K562 (cell line): ENCODE measurements at regions of chr11 and their contacts with region 1.

Region 1: DNA sequence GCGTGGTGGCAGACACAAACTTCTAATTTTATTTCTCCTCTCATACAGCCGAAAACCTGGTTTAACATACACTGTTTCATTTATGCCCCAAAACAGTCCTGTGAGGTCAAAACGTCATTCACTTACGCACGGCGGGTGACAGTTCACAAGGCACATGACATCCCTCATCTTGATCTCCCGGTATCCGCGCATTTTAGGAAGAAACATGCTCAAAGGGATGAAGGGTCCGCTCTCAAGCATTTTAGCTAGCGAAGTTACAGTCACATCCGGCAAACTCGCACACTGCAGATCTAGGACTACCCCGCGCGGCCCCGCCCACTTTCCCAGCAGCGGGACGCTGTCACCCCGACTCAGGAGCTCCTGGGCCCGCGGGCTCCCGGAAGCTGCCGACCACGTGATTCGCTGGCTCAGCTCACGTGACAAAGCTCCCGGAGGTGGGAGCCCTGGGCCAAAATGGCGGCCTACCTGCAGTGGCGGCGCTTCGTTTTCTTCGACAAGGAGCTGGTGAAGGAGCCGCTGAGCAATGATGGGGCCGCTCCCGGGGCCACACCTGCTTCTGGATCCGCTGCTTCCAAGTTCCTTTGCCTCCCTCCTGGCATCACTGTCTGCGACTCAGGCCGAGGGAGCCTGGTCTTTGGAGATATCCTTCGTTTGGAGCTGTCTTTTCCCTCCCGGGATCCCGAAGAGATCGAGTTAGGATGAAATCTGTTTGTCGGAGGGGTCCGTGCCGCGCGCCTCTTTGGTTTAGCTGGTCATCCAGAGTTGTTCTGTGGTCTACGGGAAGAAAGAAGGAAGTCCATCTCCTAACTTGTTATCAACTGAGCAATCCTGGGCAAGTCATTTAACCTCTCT is at the start of gene VPS11:
- DNase-seq: peak; percentile 93 to 99 (median 96)
- ATAC-seq: peak; percentile 94
- H3K4me3 ChIP-seq: peak within 1 kb of the TSS; percentile 57
- H3K27ac ChIP-seq: peak within 1 kb of the TSS; percentile 71
- H3K4me1 ChIP-seq: peaks cover 15 to 21% of the 10 kb centered on the region in 2 experiments; a peak in 4 of 5 replicates
- H3K27me3 ChIP-seq: no peaks in the 10 kb centered on the region
- CTCF ChIP-seq: no peak
- EP300 ChIP-seq: 0 out of 2 replicates have a peak, but pooled peaks have one; percentile 21
- POLR2A ChIP-seq: peak; percentile 80
- RAD21 ChIP-seq: no peak
- polyA plus RNA-seq, gene VPS11: 19.7 to 31.6 TPM

Region 2: DNA sequence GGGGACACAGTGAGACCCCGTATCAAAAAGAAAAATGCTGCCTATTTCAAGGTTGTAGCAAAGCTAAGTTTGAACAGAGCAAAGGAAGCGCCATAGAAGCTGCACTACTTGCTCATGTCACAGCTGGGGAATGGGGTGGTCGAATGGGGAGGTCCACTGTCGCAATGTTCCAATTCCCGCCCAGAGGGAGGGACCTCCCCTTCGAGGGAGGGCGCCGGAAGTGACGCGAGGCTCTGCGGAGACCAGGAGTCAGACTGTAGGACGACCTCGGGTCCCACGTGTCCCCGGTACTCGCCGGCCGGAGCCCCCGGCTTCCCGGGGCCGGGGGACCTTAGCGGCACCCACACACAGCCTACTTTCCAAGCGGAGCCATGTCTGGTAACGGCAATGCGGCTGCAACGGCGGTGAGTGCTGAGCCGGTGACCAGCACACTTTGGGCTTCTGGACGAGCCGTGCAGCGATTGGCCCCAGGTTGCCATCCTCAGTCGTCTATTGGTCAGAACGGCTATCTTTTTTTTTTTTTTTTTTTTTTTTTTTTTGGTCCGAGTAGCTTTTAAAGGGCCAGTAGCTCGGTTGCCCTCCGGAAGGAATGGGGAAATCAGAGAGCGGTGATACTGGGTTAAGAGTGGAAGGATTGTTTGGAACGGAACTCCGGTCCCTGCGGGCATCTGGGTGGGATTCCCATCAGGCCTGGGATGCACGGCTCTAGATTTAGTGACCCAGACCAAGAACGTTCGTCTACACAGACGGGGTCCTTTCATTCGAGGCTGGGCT is 17.3 kb after region 1 on chr11 and contains the start of gene HMBS:
- CTCF ChIA-PET with region 1: no interaction called
- POLR2A ChIA-PET with region 1: interaction called, 50 read pairs
- in situ Hi-C with region 1: no loop called
- intact Hi-C with region 1: loop called (anchors 2 kb)
- DNase-seq: peak; percentile 86 to 98 (median 88)
- ATAC-seq: peak; percentile 82
- H3K4me3 ChIP-seq: peak within 1 kb of the TSS; percentile 79
- H3K27ac ChIP-seq: peak within 1 kb of the TSS; percentile 99
- H3K4me1 ChIP-seq: peaks cover 25 to 42% of the 10 kb centered on the region in 2 experiments; a peak in 4 of 5 replicates
- H3K27me3 ChIP-seq: no peaks in the 10 kb centered on the region
- CTCF ChIP-seq: no peak
- EP300 ChIP-seq: no peak
- POLR2A ChIP-seq: peak; percentile 92
- RAD21 ChIP-seq: 0 out of 4 replicates have a peak, but pooled peaks of 1 of the 2 experiments have one; percentile 6
- polyA plus RNA-seq, gene HMBS: 308 to 385 TPM